ENCODE measurements at regions of chr14 and their contacts with region 1.

Region 1: DNA sequence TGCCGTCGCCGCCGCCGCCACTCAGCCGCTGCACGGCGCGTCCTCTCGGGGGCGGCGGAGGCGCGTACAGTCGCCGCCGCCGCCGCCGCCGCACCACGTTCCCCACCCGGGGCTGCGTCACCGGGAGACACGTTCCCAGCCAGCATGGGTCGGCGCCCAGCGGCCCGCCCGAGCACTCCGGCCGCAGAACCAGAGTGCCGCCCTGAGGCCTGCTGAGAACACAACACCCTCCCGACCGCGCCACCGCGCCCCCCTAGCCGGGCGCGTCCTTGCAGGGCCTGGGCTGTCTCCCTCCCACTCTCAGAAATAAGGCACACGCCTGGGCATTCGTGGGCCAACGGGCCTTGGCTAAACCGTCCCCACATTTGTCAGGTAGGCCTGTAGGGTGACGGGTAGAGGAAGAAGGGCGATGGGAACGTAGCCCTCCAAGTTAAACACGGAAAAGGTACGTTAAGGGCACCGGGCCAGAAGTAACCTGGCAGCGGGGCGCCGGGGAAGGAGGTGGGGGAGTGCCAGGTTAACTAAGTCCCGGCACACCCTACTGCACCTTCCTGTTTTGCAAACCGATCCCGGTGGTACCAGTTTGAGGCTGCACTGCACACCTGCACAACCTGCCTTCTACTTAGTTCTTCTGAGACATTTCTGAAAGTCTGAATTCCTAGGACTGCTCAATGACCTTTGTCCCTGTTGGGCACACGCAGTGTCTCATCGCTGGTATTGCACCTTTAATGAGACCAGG is at the start of gene MAP4K5:
- DNase-seq: peak; percentile 76 to 90 (median 85)
- ATAC-seq: peak; percentile 97
- H3K4me3 ChIP-seq: peak within 1 kb of the TSS; percentile 50
- H3K4me3 Mint-ChIP-seq: peak within 1 kb of the TSS; percentile 82 to 93 (median 91)
- H3K27ac ChIP-seq: peak within 1 kb of the TSS; percentile 78
- H3K27ac Mint-ChIP-seq: peak within 1 kb of the TSS; percentile 64 to 96 (median 89)
- H3K4me1 ChIP-seq: peaks cover 16 to 24% of the 10 kb centered on the region in 2 donors
- H3K4me1 Mint-ChIP-seq: peaks cover 36 to 59% (median 46%) of the 10 kb centered on the region in 7 donors
- H3K27me3 ChIP-seq: no peaks in the 10 kb centered on the region
- H3K27me3 Mint-ChIP-seq: peaks cover 0 to 21% (median 0%) of the 10 kb centered on the region in 5 donors
- total RNA-seq, gene MAP4K5: 30.0 to 47.5 (median 35.1) TPM

Region 2: GRCh38 chr14:49620182-49621113 is 912.2 kb before region 1 on chr14 and contains the starts of genes MGAT2 and RPL36AL:
- CTCF ChIA-PET with region 1: no interaction called
- POLR2A ChIA-PET with region 1: interaction called, 3 read pairs
- intact Hi-C with region 1: loop called in 1 of 2 experiments (anchors 5 kb)
- DNase-seq: peak; percentile 89 to 95 (median 94)
- ATAC-seq: peak; percentile 92
- H3K4me3 ChIP-seq: peak within 1 kb of the TSS; percentile 98
- H3K4me3 Mint-ChIP-seq: peak within 1 kb of the TSS; percentile 94 to 99 (median 98)
- H3K27ac ChIP-seq: peak within 1 kb of the TSS; percentile 97
- H3K27ac Mint-ChIP-seq: peak within 1 kb of the TSS; percentile 95 to 100 (median 99)
- H3K4me1 ChIP-seq: peaks cover 40 to 42% of the 10 kb centered on the region in 2 donors
- H3K4me1 Mint-ChIP-seq: peaks cover 36 to 75% (median 56%) of the 10 kb centered on the region in 7 donors
- H3K27me3 ChIP-seq: no peaks in the 10 kb centered on the region
- H3K27me3 Mint-ChIP-seq: no peaks in the 10 kb centered on the region
- total RNA-seq, gene MGAT2: 16.8 to 69.3 (median 35.1) TPM
- total RNA-seq, gene RPL36AL: 177 to 429 (median 281) TPM

Region 3: GRCh38 chr14:49852301-49853157 is 680.1 kb before region 1 on chr14 and contains the start of gene NEMF:
- CTCF ChIA-PET with region 1: no interaction called
- POLR2A ChIA-PET with region 1: no interaction called
- intact Hi-C with region 1: loop called (anchors 1 kb)
- DNase-seq: peak; percentile 67 to 81 (median 78)
- ATAC-seq: peak; percentile 90
- H3K4me3 ChIP-seq: peak within 1 kb of the TSS; percentile 86
- H3K4me3 Mint-ChIP-seq: peak within 1 kb of the TSS; percentile 93 to 100 (median 96)
- H3K27ac ChIP-seq: peak within 1 kb of the TSS; percentile 87
- H3K27ac Mint-ChIP-seq: peak within 1 kb of the TSS; percentile 94 to 99 (median 97)
- H3K4me1 ChIP-seq: peaks cover 17 to 31% of the 10 kb centered on the region in 2 donors
- H3K4me1 Mint-ChIP-seq: peaks cover 26 to 49% (median 43%) of the 10 kb centered on the region in 7 donors
- H3K27me3 ChIP-seq: no peaks in the 10 kb centered on the region
- H3K27me3 Mint-ChIP-seq: no peaks in the 10 kb centered on the region
- total RNA-seq, gene NEMF: 88.6 to 127 (median 105) TPM

Region 4: DNA sequence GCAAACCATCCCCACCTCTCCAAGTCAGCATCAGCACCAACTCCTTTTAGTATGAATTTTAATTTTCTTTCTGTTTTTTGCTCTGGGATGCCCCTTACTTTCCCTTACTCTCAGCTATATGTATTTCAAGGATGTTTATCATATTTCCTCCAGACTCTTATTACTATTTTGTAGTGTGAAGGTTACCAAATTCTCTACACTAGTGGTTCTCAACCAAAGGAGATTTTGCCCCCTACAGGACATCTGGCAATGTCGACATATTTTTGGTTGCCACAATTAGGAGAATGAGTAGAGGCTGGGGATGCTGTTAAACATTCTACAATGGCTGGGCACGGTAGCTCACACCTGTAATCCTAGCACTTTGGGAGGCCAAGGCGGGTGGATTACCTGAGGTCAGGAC is 272.2 kb before region 1 on chr14:
- CTCF ChIA-PET with region 1: no interaction called
- POLR2A ChIA-PET with region 1: no interaction called
- intact Hi-C with region 1: loop called in 1 of 2 experiments (anchors 1 kb)
- DNase-seq: peak in 7 of 9 donors; percentile 10 to 46 (median 26)
- ATAC-seq: peak; percentile 67
- H3K4me3 ChIP-seq: no peak overlapping the region
- H3K4me3 Mint-ChIP-seq: no peak overlapping the region
- H3K27ac ChIP-seq: no peak overlapping the region
- H3K27ac Mint-ChIP-seq: peak overlapping the region in 3 of 9 donors; percentile 4 to 16 (median 8)
- H3K4me1 ChIP-seq: no peaks in the 10 kb centered on the region
- H3K4me1 Mint-ChIP-seq: peaks cover 0 to 8% (median 0%) of the 10 kb centered on the region in 7 donors
- H3K27me3 ChIP-seq: no peaks in the 10 kb centered on the region
- H3K27me3 Mint-ChIP-seq: no peaks in the 10 kb centered on the region

Region 5: DNA sequence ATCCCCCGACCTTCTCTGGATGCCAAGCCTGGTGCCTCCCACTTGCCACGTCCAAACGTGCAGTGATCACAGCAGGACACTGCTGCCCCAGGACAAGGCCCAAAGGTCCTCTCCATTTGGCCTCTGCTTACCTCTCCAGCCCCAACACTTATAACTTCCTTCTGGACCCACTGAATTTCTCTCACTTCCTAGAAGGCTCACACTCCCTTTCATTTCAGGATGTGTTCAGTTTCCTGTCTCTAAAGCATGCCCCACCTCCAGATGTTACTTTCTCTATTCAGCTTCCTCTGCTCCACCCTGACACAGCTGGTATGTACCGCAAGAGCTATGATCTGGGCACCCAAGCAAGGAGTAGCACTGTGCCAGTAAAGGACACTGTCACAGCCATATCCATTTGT is 169.0 kb before region 1 on chr14:
- CTCF ChIA-PET with region 1: no interaction called
- POLR2A ChIA-PET with region 1: interaction called, 3 read pairs
- intact Hi-C with region 1: loop called in 1 of 2 experiments (anchors 2 kb)
- DNase-seq: peak in 8 of 9 donors; percentile 36 to 68 (median 57)
- ATAC-seq: peak; percentile 94
- H3K4me3 ChIP-seq: peak overlapping the region; percentile 67
- H3K4me3 Mint-ChIP-seq: peak overlapping the region; percentile 80 to 94 (median 90)
- H3K27ac ChIP-seq: peak overlapping the region; percentile 72
- H3K27ac Mint-ChIP-seq: peak overlapping the region; percentile 90 to 95 (median 93)
- H3K4me1 ChIP-seq: peaks cover 10 to 12% of the 10 kb centered on the region in 2 donors
- H3K4me1 Mint-ChIP-seq: peaks cover 23 to 58% (median 43%) of the 10 kb centered on the region in 7 donors
- H3K27me3 ChIP-seq: no peaks in the 10 kb centered on the region
- H3K27me3 Mint-ChIP-seq: no peaks in the 10 kb centered on the region

Region 6: DNA sequence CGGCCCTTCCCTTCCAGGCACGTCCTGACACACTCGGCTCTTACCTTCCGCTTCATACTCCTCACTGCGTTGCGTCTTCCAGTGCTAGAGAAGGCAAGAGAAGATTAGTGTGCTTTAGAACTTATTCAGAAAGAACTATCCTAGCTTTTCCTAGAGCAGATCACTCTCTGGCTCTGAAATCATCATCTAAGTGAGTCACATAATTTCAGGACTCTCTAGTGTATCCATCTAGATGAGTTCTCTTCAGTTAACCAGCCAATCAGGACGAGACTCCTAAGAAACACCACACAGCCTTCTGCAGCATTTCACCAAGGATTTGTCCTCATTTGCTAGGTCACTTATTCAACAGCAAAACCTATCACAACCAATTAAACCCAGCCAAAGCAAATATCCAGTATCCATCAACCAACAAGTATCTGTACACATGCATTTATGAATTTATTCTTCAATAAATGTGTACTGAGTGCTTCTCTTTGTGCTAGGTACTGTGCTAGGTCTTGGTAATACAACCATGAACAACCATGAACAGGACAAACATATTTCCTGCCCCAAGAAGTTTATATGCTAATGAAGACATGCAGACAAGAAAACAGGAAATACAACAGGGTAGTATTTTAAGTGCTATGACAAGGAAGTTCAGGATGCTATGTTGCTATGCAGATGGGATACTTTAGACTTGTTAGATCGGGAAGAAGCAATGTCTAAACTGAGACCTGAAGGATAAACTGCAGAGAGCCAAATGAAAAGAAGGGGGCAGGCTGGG is 246.2 kb after region 1 on chr14:
- CTCF ChIA-PET with region 1: no interaction called
- POLR2A ChIA-PET with region 1: no interaction called
- intact Hi-C with region 1: loop called in 1 of 2 experiments (anchors 2 kb)
- DNase-seq: no peak
- ATAC-seq: no peak
- H3K4me3 ChIP-seq: no peak overlapping the region
- H3K4me3 Mint-ChIP-seq: peak overlapping the region in 4 of 10 donors; percentile 39 to 63 (median 50)
- H3K27ac ChIP-seq: no peak overlapping the region
- H3K27ac Mint-ChIP-seq: peak overlapping the region in 8 of 9 donors; percentile 61 to 97 (median 88)
- H3K4me1 ChIP-seq: peaks cover 31 to 32% of the 10 kb centered on the region in 2 donors
- H3K4me1 Mint-ChIP-seq: peaks cover 26 to 76% (median 66%) of the 10 kb centered on the region in 7 donors
- H3K27me3 ChIP-seq: no peaks in the 10 kb centered on the region
- H3K27me3 Mint-ChIP-seq: no peaks in the 10 kb centered on the region

Measured in naive thymus-derived CD4-positive, alpha-beta T cell (primary cell).